HCT116 (cell line): ENCODE measurements at regions of chr17 and their contacts with region 1.

Region 1: DNA sequence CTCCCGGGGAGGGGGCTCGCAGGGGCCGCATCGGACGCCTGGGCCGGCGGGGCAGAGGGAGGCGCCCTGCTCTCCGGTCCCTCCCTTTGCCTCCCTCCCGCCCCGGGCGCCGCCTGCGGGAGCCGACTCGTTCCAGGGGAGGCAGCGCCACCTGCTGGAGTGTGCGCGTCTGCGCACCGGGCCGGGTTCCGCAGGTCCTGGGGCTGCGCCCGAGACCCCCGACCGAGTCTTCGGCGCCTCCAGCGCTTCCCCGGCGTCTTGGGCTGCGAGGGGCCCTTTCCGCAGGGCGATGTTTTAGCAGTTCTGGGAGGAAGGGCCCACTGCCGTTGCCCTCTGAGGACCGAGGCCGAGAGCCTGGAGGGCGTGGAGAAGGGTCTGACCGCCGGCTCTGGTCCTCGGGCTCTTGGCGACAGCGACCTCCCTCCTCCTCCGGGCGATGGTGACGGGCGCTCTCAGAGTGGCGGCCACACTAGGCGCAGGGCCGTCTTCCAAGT is 106.3 kb downstream of the SEC14L1 start:
- DNase-seq: peak; percentile 60
- ATAC-seq: peak; percentile 96
- H3K4me3 ChIP-seq: peak overlapping the region; percentile 38 to 53
- H3K27ac ChIP-seq: no peak overlapping the region; the same call in 1 of the 2 replicates
- H3K4me1 ChIP-seq: peaks cover 0 to 16% of the 10 kb centered on the region in 2 experiments; a peak in 1 of 4 replicates
- H3K27me3 ChIP-seq: no peaks in the 10 kb centered on the region
- CTCF ChIP-seq: peak; percentile 90 to 97 (median 91)
- POLR2A ChIP-seq: no peak
- RAD21 ChIP-seq: peak; percentile 96

Region 2: GRCh38 chr17:76868176-76868668 is 378.9 kb before region 1 on chr17 and contains the start of gene MGAT5B:
- CTCF ChIA-PET with region 1: no interaction called
- POLR2A ChIA-PET with region 1: no interaction called
- RAD21 ChIA-PET with region 1: no interaction called
- intact Hi-C with region 1: loop called (anchors 5 kb)
- DNase-seq: peak; percentile 56
- ATAC-seq: peak; percentile 81
- H3K4me3 ChIP-seq: peak within 1 kb of the TSS; percentile 29 to 42
- H3K27ac ChIP-seq: peak within 1 kb of the TSS; percentile 26; the same call in 1 of the 2 replicates
- H3K4me1 ChIP-seq: peaks cover 32 to 50% of the 10 kb centered on the region in 2 experiments
- H3K27me3 ChIP-seq: no peaks in the 10 kb centered on the region
- CTCF ChIP-seq: peak; percentile 68 to 81 (median 80)
- POLR2A ChIP-seq: no peak
- RAD21 ChIP-seq: peak; percentile 89
- total RNA-seq, gene MGAT5B: 4.4 TPM

Region 3: GRCh38 chr17:77011173-77012011 is 235.7 kb before region 1 on chr17:
- CTCF ChIA-PET with region 1: no interaction called
- POLR2A ChIA-PET with region 1: no interaction called
- RAD21 ChIA-PET with region 1: no interaction called
- intact Hi-C with region 1: loop called (anchors 1 kb)
- DNase-seq: peak; percentile 48
- ATAC-seq: peak; percentile 81
- H3K4me3 ChIP-seq: no peak overlapping the region
- H3K27ac ChIP-seq: no peak overlapping the region
- H3K4me1 ChIP-seq: no peaks in the 10 kb centered on the region
- H3K27me3 ChIP-seq: no peaks in the 10 kb centered on the region
- CTCF ChIP-seq: peak; percentile 88 to 93 (median 89)
- POLR2A ChIP-seq: no peak
- RAD21 ChIP-seq: peak; percentile 89

Region 4: DNA sequence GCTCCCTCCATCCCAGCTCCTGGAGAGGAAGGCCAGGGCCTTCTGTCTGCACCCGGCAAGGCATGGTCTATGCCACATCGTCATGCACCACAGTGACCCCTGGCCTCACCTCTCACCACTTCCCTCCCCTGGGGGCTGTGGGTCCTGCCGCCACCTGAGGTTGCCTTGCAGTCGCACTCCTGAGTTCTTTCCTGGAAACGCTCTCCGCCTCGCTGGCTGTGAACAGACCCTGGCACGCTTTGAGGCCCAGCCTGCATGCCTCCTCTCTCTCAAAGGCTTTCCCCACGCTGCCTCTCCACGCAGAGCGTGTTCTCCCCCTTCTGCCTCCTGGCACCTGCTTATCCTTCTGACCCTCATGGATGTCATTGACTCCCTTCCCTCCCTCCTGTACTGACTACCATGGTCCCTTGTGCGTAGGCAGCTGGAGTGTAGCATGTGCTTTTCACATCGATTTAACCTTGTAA is 60.9 kb before region 1 on chr17:
- CTCF ChIA-PET with region 1: no interaction called
- POLR2A ChIA-PET with region 1: no interaction called
- RAD21 ChIA-PET with region 1: no interaction called
- intact Hi-C with region 1: no loop called
- DNase-seq: no peak
- ATAC-seq: no peak
- H3K4me3 ChIP-seq: no peak overlapping the region
- H3K27ac ChIP-seq: no peak overlapping the region
- H3K4me1 ChIP-seq: peaks cover 0 to 8% of the 10 kb centered on the region in 2 experiments; a peak in 1 of 4 replicates
- H3K27me3 ChIP-seq: no peaks in the 10 kb centered on the region
- CTCF ChIP-seq: no peak
- POLR2A ChIP-seq: no peak
- RAD21 ChIP-seq: no peak

Region 5: GRCh38 chr17:77287432-77288071 is 40.5 kb after region 1 on chr17:
- CTCF ChIA-PET with region 1: no interaction called
- POLR2A ChIA-PET with region 1: no interaction called
- RAD21 ChIA-PET with region 1: no interaction called
- intact Hi-C with region 1: no loop called
- DNase-seq: peak; percentile 92
- ATAC-seq: peak; percentile 60
- H3K4me3 ChIP-seq: peak overlapping the region; percentile 39 to 52
- H3K27ac ChIP-seq: peak overlapping the region; percentile 98
- H3K4me1 ChIP-seq: peaks cover 79 to 95% of the 10 kb centered on the region in 2 experiments
- H3K27me3 ChIP-seq: no peaks in the 10 kb centered on the region
- CTCF ChIP-seq: no peak
- POLR2A ChIP-seq: no peak
- RAD21 ChIP-seq: no peak

Region 6: DNA sequence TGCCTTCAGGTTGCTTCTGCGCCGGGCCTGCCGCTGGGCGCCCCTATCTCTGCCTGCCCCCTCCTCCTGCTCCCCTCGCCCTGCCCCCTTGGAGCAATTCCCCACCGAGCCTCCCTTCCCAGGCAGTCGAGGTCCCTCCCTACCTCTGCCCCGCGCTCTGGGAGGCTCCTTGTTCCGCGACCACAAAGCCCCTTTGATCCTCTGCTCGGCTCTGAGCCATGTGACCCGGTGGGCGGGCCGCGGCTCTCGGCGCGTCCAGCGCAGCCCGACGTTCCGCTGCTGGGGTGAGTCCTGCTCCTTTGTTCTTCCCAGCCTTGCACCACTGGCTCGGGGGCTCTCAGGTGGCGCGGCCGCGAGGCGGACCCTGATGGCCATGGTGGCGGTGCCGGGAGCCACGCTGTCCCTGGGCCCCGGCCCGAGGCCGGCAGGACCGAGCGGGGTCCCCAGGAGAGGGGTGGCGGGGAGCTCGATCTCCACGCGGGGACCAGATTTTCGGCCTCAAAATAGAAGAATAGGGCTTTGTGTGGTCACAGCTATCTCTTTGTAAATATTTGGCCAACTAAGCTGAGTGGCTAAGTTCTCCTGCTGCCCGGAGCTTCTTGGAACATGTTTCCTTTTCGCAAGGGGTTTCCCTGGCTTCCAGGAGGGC is 204.3 kb after region 1 on chr17:
- CTCF ChIA-PET with region 1: no interaction called
- POLR2A ChIA-PET with region 1: no interaction called
- RAD21 ChIA-PET with region 1: no interaction called
- intact Hi-C with region 1: no loop called
- DNase-seq: no peak
- ATAC-seq: peak; percentile 31; the same call in 1 of the 2 replicates
- H3K4me3 ChIP-seq: no peak overlapping the region
- H3K27ac ChIP-seq: no peak overlapping the region; the same call in 1 of the 2 replicates
- H3K4me1 ChIP-seq: peaks cover 25 to 39% of the 10 kb centered on the region in 2 experiments
- H3K27me3 ChIP-seq: no peaks in the 10 kb centered on the region
- CTCF ChIP-seq: no peak
- POLR2A ChIP-seq: no peak
- RAD21 ChIP-seq: no peak